ENCODE measurements at regions of chr1 and their contacts with region 1.

Region 1: DNA sequence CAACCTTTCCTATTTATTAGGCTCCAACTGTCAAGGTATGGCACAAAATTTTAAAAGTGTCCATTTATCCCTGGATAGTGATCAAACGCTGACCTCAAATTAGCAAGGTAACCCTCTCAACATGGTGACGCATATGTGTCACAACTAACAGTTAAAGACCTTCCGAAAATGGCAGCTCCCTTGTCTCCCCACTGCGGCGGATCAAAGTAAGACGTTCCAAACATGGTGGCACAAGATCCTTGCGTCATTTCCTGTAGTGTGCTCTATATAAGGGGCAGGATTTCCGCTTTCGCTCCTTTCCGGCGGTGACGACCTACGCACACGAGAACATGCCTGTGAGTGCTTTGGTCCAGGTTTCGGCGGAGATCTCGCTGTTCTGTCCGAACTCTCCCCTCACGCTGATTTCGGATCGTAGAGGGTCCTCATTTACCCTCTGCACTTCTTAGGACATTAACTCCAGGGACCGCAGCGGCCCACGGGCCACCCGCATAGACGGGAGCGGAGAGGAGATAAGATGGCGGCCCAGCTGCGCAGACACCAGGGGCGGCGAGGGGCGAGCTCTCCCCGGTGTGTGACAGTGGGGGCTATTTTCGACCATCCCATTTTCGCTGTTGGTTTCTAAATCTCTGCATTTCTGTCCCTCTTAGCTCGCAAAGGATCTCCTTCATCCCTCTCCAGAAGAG is at the start of gene RPS27:
- DNase-seq: peak; percentile 76 to 97 (median 92)
- ATAC-seq: peak; percentile 90
- H3K4me3 ChIP-seq: peak within 1 kb of the TSS; percentile 82
- H3K4me3 Mint-ChIP-seq: peak within 1 kb of the TSS; percentile 83 to 99 (median 96)
- H3K27ac ChIP-seq: peak within 1 kb of the TSS; percentile 99
- H3K27ac Mint-ChIP-seq: peak within 1 kb of the TSS; percentile 92 to 100 (median 99)
- H3K4me1 ChIP-seq: peaks cover 26 to 34% of the 10 kb centered on the region in 2 donors
- H3K4me1 Mint-ChIP-seq: peaks cover 32 to 62% (median 44%) of the 10 kb centered on the region in 7 donors
- H3K27me3 ChIP-seq: no peaks in the 10 kb centered on the region
- H3K27me3 Mint-ChIP-seq: peaks cover 2 to 8% (median 4%) of the 10 kb centered on the region in 5 donors
- total RNA-seq, gene RPS27: 2,313 to 8,530 (median 5,699) TPM

Region 2: DNA sequence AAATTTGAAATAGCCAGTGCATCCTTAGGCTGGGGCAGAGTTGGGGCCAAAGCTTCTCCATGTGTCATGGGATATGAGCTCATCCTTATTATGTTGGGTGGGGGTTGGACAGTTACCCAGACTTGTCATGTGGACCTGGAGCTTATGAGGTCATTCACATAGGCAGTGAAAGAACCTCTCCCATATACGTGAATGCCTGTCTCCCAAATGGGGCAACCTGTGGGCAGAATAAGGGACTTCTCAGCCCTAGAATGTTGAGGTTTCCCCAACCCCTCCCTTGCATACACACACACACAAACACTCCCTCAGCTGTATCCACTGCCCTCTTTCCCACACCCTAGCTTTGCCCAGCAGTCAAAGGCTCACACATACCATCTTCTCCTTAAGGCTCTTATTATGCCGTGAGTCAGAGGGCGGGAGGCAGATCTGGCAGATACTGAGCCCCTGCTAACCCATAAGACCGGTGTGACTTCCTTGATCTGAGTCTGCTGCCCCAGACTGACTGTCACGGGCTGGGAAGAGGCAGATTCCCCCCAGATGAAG is 1084.5 kb before region 1 on chr1:
- CTCF ChIA-PET with region 1: no interaction called
- POLR2A ChIA-PET with region 1: no interaction called
- intact Hi-C with region 1: no loop called
- DNase-seq: no peak
- ATAC-seq: no peak
- H3K4me3 ChIP-seq: no peak overlapping the region
- H3K4me3 Mint-ChIP-seq: no peak overlapping the region
- H3K27ac ChIP-seq: no peak overlapping the region
- H3K27ac Mint-ChIP-seq: no peak overlapping the region
- H3K4me1 ChIP-seq: no peaks in the 10 kb centered on the region
- H3K4me1 Mint-ChIP-seq: peaks cover 0 to 5% (median 0%) of the 10 kb centered on the region in 7 donors
- H3K27me3 ChIP-seq: peaks cover 0 to 5% of the 10 kb centered on the region in 2 donors
- H3K27me3 Mint-ChIP-seq: peaks cover 5 to 48% (median 40%) of the 10 kb centered on the region in 5 donors

Region 3: GRCh38 chr1:153532769-153533599 is 457.6 kb before region 1 on chr1:
- CTCF ChIA-PET with region 1: no interaction called
- POLR2A ChIA-PET with region 1: no interaction called
- intact Hi-C with region 1: loop called in 1 of 2 experiments (anchors 10 kb)
- DNase-seq: peak; percentile 62 to 85 (median 78)
- ATAC-seq: peak; percentile 55
- H3K4me3 ChIP-seq: peak overlapping the region; percentile 49
- H3K4me3 Mint-ChIP-seq: peak overlapping the region; percentile 77 to 98 (median 96)
- H3K27ac ChIP-seq: peak overlapping the region; percentile 98
- H3K27ac Mint-ChIP-seq: peak overlapping the region; percentile 86 to 99 (median 96)
- H3K4me1 ChIP-seq: peaks cover 53 to 59% of the 10 kb centered on the region in 2 donors
- H3K4me1 Mint-ChIP-seq: peaks cover 46 to 75% (median 63%) of the 10 kb centered on the region in 7 donors
- H3K27me3 ChIP-seq: no peaks in the 10 kb centered on the region
- H3K27me3 Mint-ChIP-seq: no peaks in the 10 kb centered on the region

Region 4: GRCh38 chr1:153677718-153678505 is 312.7 kb before region 1 on chr1:
- CTCF ChIA-PET with region 1: interaction called, 3 read pairs
- POLR2A ChIA-PET with region 1: no interaction called
- intact Hi-C with region 1: loop called (anchors 1 kb)
- DNase-seq: peak in 8 of 9 donors; percentile 23 to 55 (median 44)
- ATAC-seq: peak; percentile 69
- H3K4me3 ChIP-seq: peak overlapping the region; percentile 34
- H3K4me3 Mint-ChIP-seq: peak overlapping the region; percentile 80 to 92 (median 88)
- H3K27ac ChIP-seq: no peak overlapping the region
- H3K27ac Mint-ChIP-seq: no peak overlapping the region
- H3K4me1 ChIP-seq: peaks cover 8 to 17% of the 10 kb centered on the region in 2 donors
- H3K4me1 Mint-ChIP-seq: peaks cover 18 to 25% (median 23%) of the 10 kb centered on the region in 7 donors
- H3K27me3 ChIP-seq: peaks cover 5 to 7% of the 10 kb centered on the region in 2 donors
- H3K27me3 Mint-ChIP-seq: peaks cover 33 to 56% (median 45%) of the 10 kb centered on the region in 5 donors

Region 5: DNA sequence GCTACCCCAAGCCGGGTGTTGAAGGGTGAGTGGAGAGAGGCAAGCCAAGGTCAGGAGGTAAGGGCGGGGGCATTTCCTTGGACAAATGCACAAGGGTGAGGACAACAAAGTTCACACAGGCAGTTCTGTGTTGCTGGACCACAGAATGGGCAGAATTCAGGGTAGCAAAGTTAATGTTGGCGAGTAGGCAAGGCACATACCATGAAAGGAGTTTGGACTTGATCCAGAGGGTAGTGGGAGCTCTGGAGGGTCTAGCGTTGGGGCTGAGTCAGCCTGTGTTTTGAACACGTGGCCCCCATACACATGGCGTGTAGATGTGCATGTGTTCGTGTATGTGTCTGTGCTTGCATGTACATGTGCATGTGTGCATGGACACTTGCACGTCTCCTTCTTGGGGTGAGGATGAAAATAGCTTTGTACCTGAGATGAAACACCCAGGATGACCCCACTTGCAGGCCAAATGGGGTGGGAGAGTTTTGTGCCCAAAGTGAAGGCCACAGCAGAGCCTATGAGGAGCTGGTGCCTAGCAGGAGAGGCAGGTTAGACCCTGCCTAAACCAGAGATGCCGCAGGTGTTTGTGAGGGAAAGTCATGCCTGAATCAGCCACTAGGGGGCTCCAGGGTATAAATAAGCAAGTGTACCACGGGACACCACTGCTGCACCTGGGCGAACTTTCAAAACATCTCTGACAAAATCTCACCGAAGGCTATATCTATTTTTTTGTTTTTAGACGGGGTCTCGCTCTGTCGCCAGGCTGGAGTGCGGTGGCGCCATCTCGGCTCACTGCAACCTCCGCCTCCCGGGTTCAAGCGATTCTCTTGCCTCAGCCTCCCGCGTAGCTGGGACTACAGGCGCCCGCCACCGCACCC is 193.6 kb before region 1 on chr1:
- CTCF ChIA-PET with region 1: interaction called, 84 read pairs
- POLR2A ChIA-PET with region 1: interaction called, 29 read pairs
- intact Hi-C with region 1: loop called (anchors 1 kb)
- DNase-seq: peak; percentile 57 to 84 (median 78)
- ATAC-seq: peak; percentile 92
- H3K4me3 ChIP-seq: no peak overlapping the region
- H3K4me3 Mint-ChIP-seq: no peak overlapping the region
- H3K27ac ChIP-seq: no peak overlapping the region
- H3K27ac Mint-ChIP-seq: peak overlapping the region in 7 of 9 donors; percentile 39 to 84 (median 65)
- H3K4me1 ChIP-seq: peaks cover 0 to 6% of the 10 kb centered on the region in 2 donors
- H3K4me1 Mint-ChIP-seq: peaks cover 4 to 17% (median 8%) of the 10 kb centered on the region in 7 donors
- H3K27me3 ChIP-seq: no peaks in the 10 kb centered on the region
- H3K27me3 Mint-ChIP-seq: no peaks in the 10 kb centered on the region

Region 6: GRCh38 chr1:153958111-153958960 is 32.3 kb before region 1 on chr1 and contains the start of gene CRTC2:
- CTCF ChIA-PET with region 1: interaction called, 11 read pairs
- POLR2A ChIA-PET with region 1: interaction called, 30 read pairs
- intact Hi-C with region 1: loop called (anchors 1 kb)
- DNase-seq: peak; percentile 86 to 99 (median 96)
- ATAC-seq: peak; percentile 94
- H3K4me3 ChIP-seq: peak within 1 kb of the TSS; percentile 74
- H3K4me3 Mint-ChIP-seq: peak within 1 kb of the TSS; percentile 91 to 100 (median 97)
- H3K27ac ChIP-seq: peak within 1 kb of the TSS; percentile 92
- H3K27ac Mint-ChIP-seq: peak within 1 kb of the TSS; percentile 89 to 98 (median 94)
- H3K4me1 ChIP-seq: peaks cover 36% of the 10 kb centered on the region in 2 donors
- H3K4me1 Mint-ChIP-seq: peaks cover 34 to 71% (median 67%) of the 10 kb centered on the region in 7 donors
- H3K27me3 ChIP-seq: no peaks in the 10 kb centered on the region
- H3K27me3 Mint-ChIP-seq: no peaks in the 10 kb centered on the region
- total RNA-seq, gene CRTC2: 86.1 to 157 (median 119) TPM

Region 7: GRCh38 chr1:154183045-154183915 is 192.7 kb after region 1 on chr1:
- CTCF ChIA-PET with region 1: interaction called, 3 read pairs
- POLR2A ChIA-PET with region 1: interaction called, 44 read pairs
- intact Hi-C with region 1: loop called (anchors 1 kb)
- DNase-seq: peak; percentile 84 to 94 (median 94)
- ATAC-seq: peak; percentile 89
- H3K4me3 ChIP-seq: peak overlapping the region; percentile 93
- H3K4me3 Mint-ChIP-seq: peak overlapping the region; percentile 98 to 100 (median 100)
- H3K27ac ChIP-seq: peak overlapping the region; percentile 95
- H3K27ac Mint-ChIP-seq: peak overlapping the region; percentile 98 to 100 (median 99)
- H3K4me1 ChIP-seq: peaks cover 25 to 44% of the 10 kb centered on the region in 2 donors
- H3K4me1 Mint-ChIP-seq: peaks cover 44 to 49% (median 48%) of the 10 kb centered on the region in 7 donors
- H3K27me3 ChIP-seq: no peaks in the 10 kb centered on the region
- H3K27me3 Mint-ChIP-seq: peaks cover 0 to 7% (median 0%) of the 10 kb centered on the region in 5 donors

Region 8: GRCh38 chr1:154536570-154536969 is 546.0 kb after region 1 on chr1:
- CTCF ChIA-PET with region 1: no interaction called
- POLR2A ChIA-PET with region 1: no interaction called
- intact Hi-C with region 1: no loop called
- DNase-seq: no peak
- ATAC-seq: no peak
- H3K4me3 ChIP-seq: no peak overlapping the region
- H3K4me3 Mint-ChIP-seq: no peak overlapping the region
- H3K27ac ChIP-seq: no peak overlapping the region
- H3K27ac Mint-ChIP-seq: no peak overlapping the region
- H3K4me1 ChIP-seq: no peaks in the 10 kb centered on the region
- H3K4me1 Mint-ChIP-seq: no peaks in the 10 kb centered on the region
- H3K27me3 ChIP-seq: no peaks in the 10 kb centered on the region
- H3K27me3 Mint-ChIP-seq: peaks cover 0 to 33% (median 4%) of the 10 kb centered on the region in 5 donors

Measured in naive thymus-derived CD4-positive, alpha-beta T cell (primary cell).